Mammary epithelial cell (primary cell): ENCODE measurements at regions of chr17 and their contacts with region 1.

Region 1: GRCh38 chr17:38667099-38667786 is 7.5 kb downstream of the EPOP start:
- DNase-seq: peak; percentile 47
- H3K4me3 ChIP-seq: no peak overlapping the region
- H3K27ac ChIP-seq: no peak overlapping the region
- H3K4me1 ChIP-seq: no peaks in the 10 kb centered on the region
- H3K27me3 ChIP-seq: peaks cover 2% of the 10 kb centered on the region
- CTCF ChIP-seq: peak; percentile 100

Region 2: GRCh38 chr17:38428112-38428642 is 239.1 kb before region 1 on chr17 and contains the start of gene ARHGAP23:
- CTCF ChIA-PET with region 1: interaction called, 8 read pairs
- dilution Hi-C with region 1: no loop called
- in situ Hi-C with region 1: loop called in 1 of 2 experiments (anchors 25 kb)
- intact Hi-C with region 1: loop called (anchors 1 kb)
- DNase-seq: peak; percentile 24
- H3K4me3 ChIP-seq: peak within 1 kb of the TSS; percentile 68 to 73 (median 71)
- H3K27ac ChIP-seq: no peak within 1 kb of the TSS
- H3K4me1 ChIP-seq: peaks cover 20% of the 10 kb centered on the region
- H3K27me3 ChIP-seq: no peaks in the 10 kb centered on the region
- CTCF ChIP-seq: no peak
- total RNA-seq, gene ARHGAP23: 30.5 to 43.0 TPM

Region 3: GRCh38 chr17:38444151-38444550 is 223.1 kb before region 1 on chr17:
- CTCF ChIA-PET with region 1: interaction called, 6 read pairs
- dilution Hi-C with region 1: loop called (anchors 5 kb)
- in situ Hi-C with region 1: loop called (anchors 10 to 25 kb)
- intact Hi-C with region 1: loop called (anchors 1 kb)
- DNase-seq: peak; percentile 54
- H3K4me3 ChIP-seq: no peak overlapping the region
- H3K27ac ChIP-seq: no peak overlapping the region
- H3K4me1 ChIP-seq: peaks cover 20% of the 10 kb centered on the region
- H3K27me3 ChIP-seq: no peaks in the 10 kb centered on the region
- CTCF ChIP-seq: peak; percentile 88 to 97

Region 4: GRCh38 chr17:38509008-38509771 is 158.1 kb before region 1 on chr17:
- CTCF ChIA-PET with region 1: interaction called, 5 read pairs
- dilution Hi-C with region 1: loop called (anchors 5 kb)
- in situ Hi-C with region 1: no loop called
- intact Hi-C with region 1: loop called (anchors 1 kb)
- DNase-seq: peak; percentile 49
- H3K4me3 ChIP-seq: no peak overlapping the region
- H3K27ac ChIP-seq: no peak overlapping the region
- H3K4me1 ChIP-seq: peaks cover 10% of the 10 kb centered on the region
- H3K27me3 ChIP-seq: no peaks in the 10 kb centered on the region
- CTCF ChIP-seq: peak; percentile 59 to 70

Region 5: GRCh38 chr17:38584350-38584925 is 82.8 kb before region 1 on chr17:
- CTCF ChIA-PET with region 1: no interaction called
- dilution Hi-C with region 1: no loop called
- in situ Hi-C with region 1: no loop called
- intact Hi-C with region 1: loop called (anchors 1 kb)
- DNase-seq: peak; percentile 54
- H3K4me3 ChIP-seq: no peak overlapping the region
- H3K27ac ChIP-seq: no peak overlapping the region
- H3K4me1 ChIP-seq: peaks cover 23% of the 10 kb centered on the region
- H3K27me3 ChIP-seq: no peaks in the 10 kb centered on the region
- CTCF ChIP-seq: peak; percentile 87 to 97

Region 6: GRCh38 chr17:38617011-38617867 is 50.0 kb before region 1 on chr17:
- CTCF ChIA-PET with region 1: no interaction called
- dilution Hi-C with region 1: loop called (anchors 5 kb)
- in situ Hi-C with region 1: no loop called
- intact Hi-C with region 1: no loop called
- DNase-seq: no peak
- H3K4me3 ChIP-seq: no peak overlapping the region
- H3K27ac ChIP-seq: no peak overlapping the region
- H3K4me1 ChIP-seq: no peaks in the 10 kb centered on the region
- H3K27me3 ChIP-seq: peaks cover 4% of the 10 kb centered on the region
- CTCF ChIP-seq: no peak

Region 7: GRCh38 chr17:38628441-38628840 is 38.8 kb before region 1 on chr17:
- CTCF ChIA-PET with region 1: no interaction called
- dilution Hi-C with region 1: no loop called
- in situ Hi-C with region 1: no loop called
- intact Hi-C with region 1: no loop called
- DNase-seq: peak; percentile 9
- H3K4me3 ChIP-seq: no peak overlapping the region
- H3K27ac ChIP-seq: no peak overlapping the region
- H3K4me1 ChIP-seq: no peaks in the 10 kb centered on the region
- H3K27me3 ChIP-seq: no peaks in the 10 kb centered on the region
- CTCF ChIP-seq: no peak

Region 8: DNA sequence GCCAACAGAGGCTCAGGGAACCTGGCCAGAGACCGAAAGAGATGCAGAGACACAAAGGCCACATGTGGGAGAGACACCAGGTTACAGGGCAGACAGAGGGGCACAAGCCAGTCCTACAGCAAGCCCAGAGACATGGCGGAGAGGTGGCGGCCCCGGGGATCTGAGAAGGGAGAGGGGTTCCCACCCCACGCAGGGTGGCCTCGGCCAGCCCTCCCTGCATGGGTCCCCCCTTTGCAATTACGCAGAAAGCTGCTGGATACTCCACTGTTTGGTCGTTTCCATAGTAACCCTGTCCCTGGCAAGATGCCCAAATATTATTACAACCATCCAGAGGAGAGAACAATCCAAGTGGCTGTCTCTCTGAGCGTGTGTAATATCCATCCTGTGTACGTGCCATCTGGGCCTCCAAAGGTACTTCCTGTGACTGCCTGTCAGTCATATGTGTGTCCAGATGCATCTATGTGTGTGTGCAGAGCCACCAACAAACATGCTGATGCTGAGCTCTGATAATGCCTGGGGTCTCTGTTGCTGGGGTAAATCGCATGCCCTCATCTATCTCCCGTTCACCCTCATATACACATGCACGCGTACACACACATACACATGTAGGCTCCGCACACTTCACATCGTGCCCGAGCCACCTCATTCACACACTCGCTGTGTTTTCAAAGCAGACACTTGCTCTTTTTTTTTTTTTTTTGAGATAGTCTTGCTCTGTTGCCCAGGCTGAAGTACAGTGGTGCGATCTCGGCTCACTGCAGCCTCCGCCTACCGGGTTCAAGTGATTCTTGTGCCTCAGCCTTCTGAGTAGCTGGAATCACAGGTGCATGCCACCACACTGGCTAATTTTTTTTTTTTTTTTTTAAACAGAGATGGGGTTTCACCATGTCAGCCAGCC is 75.4 kb after region 1 on chr17:
- CTCF ChIA-PET with region 1: no interaction called
- dilution Hi-C with region 1: no loop called
- in situ Hi-C with region 1: no loop called
- intact Hi-C with region 1: no loop called
- DNase-seq: peak; percentile 66
- H3K4me3 ChIP-seq: no peak overlapping the region
- H3K27ac ChIP-seq: peak overlapping the region; percentile 61
- H3K4me1 ChIP-seq: peaks cover 16% of the 10 kb centered on the region
- H3K27me3 ChIP-seq: no peaks in the 10 kb centered on the region
- CTCF ChIP-seq: no peak

Region 9: DNA sequence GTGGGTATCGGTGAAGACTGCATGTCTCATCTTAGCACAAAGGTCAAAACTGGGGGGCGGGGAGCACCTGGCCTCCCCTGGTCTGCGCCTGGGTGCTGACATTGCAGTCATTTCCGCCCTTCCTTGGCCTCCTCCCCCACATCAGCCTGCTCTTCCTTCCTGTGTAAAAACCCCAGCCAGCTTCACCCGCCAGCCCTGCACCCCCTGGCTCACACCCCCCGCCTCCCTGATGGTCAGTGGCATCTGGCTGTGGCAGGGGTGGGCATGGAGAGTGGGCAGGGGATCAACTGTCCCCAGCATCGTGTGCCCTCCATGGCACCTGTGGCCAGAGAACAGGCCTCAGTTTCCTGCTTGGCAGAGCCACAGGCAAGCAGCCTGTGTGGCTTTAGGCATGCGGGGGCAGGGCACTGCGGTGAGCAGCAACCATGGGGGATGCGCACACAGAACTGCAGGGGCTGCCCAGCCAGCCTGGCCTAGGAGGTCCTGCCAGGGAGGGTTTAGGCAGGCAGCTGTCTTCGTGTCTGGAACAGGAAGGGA is 231.6 kb after region 1 on chr17:
- CTCF ChIA-PET with region 1: no interaction called
- dilution Hi-C with region 1: no loop called
- in situ Hi-C with region 1: no loop called
- intact Hi-C with region 1: no loop called
- DNase-seq: no peak
- H3K4me3 ChIP-seq: no peak overlapping the region
- H3K27ac ChIP-seq: no peak overlapping the region
- H3K4me1 ChIP-seq: peaks cover 26% of the 10 kb centered on the region
- H3K27me3 ChIP-seq: no peaks in the 10 kb centered on the region
- CTCF ChIP-seq: no peak